Astrocyte of the cerebellum (primary cell): ENCODE measurements at regions of chr15 and their contacts with region 1.

Region 1: GRCh38 chr15:50496692-50497091 is 49.8 kb downstream of the USP50 start:
- DNase-seq: no peak
- H3K4me3 ChIP-seq: no peak overlapping the region
- CTCF ChIP-seq: no peak

Region 2: GRCh38 chr15:50452927-50453326 is 43.8 kb before region 1 on chr15:
- in situ Hi-C with region 1: no loop called
- DNase-seq: no peak
- H3K4me3 ChIP-seq: no peak overlapping the region
- CTCF ChIP-seq: no peak

Region 3: GRCh38 chr15:50576166-50576565 is 79.5 kb after region 1 on chr15:
- in situ Hi-C with region 1: loop called (anchors 5 kb)
- DNase-seq: no peak
- H3K4me3 ChIP-seq: no peak overlapping the region
- CTCF ChIP-seq: no peak